Left ventricle myocardium inferior (tissue), 1 donor: ENCODE measurements at regions of chr13 and their contacts with region 1.

Region 1: DNA sequence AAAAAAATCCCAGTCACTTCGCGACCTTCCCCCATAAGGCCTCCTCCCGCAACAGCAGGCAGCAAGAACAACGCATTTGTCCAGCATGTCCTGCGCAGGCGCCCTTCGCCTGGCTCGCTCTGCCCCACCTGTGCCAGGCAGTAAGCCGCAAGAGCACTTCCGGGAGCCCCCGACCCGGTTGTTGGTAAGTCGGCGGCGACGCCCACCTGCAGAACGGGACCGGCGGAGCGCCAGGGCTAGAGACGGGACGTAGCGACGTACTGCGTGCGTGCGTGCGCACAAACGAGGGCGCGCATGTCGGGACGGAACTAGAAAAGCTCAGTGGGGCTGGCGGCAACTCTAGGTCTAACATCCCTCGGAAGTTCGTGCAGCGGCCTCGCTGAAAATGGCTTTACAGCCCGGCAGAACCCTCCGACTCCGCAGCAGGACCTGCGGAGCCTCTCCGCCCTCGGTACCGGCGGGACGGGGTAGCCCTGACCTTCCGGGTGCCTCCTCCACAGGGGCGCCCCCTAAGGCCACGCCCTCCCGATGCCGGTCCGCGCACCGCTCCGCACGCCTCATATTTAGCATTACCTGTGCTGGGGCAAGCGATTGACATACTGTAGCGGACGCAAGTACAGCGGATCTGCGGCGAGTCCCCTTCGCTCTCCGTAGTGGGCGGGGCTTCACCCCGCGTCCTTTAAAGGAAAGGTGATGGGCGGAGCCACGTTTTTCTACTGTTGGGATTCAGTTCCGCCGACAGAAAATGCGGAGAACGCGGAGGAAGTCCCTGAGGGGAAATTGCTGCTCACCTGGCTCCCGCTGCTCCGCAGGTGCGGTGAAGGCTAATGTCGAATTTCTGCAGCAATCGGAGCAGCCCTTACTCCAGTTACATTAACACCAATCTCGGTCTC is at the start of gene MTIF3:
- DNase-seq: peak; percentile 92
- H3K4me3 ChIP-seq: peak within 1 kb of the TSS; percentile 88
- H3K27ac ChIP-seq: peak within 1 kb of the TSS; percentile 100
- H3K4me1 ChIP-seq: peaks cover 73% of the 10 kb centered on the region
- H3K27me3 ChIP-seq: no peaks in the 10 kb centered on the region
- CTCF ChIP-seq: peak; percentile 23
- total RNA-seq, gene MTIF3: 140 TPM

Region 2: GRCh38 chr13:27110069-27110746 is 340.0 kb before region 1 on chr13:
- intact Hi-C with region 1: no loop called
- DNase-seq: no peak
- H3K4me3 ChIP-seq: no peak overlapping the region
- H3K27ac ChIP-seq: no peak overlapping the region
- H3K4me1 ChIP-seq: peaks cover 10% of the 10 kb centered on the region
- H3K27me3 ChIP-seq: no peaks in the 10 kb centered on the region
- CTCF ChIP-seq: no peak

Region 3: DNA sequence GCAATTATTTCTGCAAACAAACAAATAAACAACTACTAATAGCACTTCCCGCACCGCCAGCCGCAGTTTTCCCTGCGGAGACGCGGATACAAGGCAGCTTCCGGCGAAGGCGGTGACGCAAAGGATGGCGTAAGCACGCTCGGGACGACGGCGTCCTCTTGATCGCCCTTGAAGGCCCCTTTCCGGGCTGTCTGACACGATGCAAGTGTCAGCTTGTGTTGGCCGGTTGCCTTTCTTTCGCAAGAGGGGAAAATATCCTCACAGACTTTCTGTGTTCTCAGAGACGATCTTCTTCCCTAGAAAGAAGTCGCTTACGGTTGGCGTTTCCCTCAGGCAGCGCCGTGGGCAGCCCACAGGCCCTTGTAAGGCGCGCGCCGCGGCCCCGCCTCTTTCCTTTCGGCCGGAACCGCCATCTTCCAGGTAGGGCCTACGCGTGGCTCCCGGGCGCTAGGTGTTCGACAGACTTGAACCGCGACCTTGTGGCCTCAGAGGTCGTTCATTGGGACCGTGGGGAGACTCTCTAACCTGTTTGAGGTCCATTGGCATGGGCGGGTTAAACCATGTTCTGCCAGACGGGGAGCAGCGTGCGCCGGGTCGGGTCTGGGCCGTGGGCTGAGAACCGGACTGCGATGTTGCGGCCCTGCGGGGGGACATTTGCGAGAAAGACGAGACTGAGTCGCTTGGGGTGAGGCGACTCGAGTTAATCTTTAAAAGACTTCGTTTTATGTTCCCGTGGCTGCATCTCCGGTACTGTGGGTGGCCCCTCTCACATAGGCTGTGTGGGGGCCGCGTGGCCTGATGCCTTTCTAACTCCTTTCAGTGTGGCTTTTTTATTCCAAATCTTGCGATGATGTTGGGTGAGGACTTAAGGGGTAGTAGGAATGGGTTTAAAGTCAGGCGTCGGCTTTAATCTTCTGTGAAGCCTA is 198.8 kb before region 1 on chr13 and contains the start of gene RPL21:
- intact Hi-C with region 1: loop called (anchors 10 kb)
- DNase-seq: peak; percentile 95
- H3K4me3 ChIP-seq: peak within 1 kb of the TSS; percentile 88
- H3K27ac ChIP-seq: peak within 1 kb of the TSS; percentile 98
- H3K4me1 ChIP-seq: peaks cover 61% of the 10 kb centered on the region
- H3K27me3 ChIP-seq: no peaks in the 10 kb centered on the region
- CTCF ChIP-seq: no peak
- total RNA-seq, gene RPL21: 674 TPM

Region 4: DNA sequence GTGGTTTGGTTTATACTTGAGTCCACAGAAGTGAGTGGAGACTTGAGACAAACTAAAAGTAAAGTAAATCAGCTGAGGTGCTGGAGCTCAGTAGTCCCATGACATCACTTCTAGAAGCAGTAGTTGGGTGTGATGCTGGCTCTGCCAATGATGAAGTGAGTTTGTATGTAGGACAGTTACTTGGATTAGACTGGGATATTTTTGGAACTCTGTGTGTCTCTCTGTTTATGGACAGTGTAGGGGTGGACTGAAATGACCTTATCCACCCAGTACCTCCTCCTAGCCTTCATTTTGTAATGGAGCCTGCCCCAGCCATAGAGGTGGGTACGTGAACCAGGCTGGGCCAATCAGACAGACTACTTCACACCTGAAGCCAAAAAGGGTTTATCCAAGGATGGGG is 223.7 kb after region 1 on chr13:
- intact Hi-C with region 1: no loop called
- DNase-seq: no peak
- H3K4me3 ChIP-seq: no peak overlapping the region
- H3K27ac ChIP-seq: peak overlapping the region; percentile 48
- H3K4me1 ChIP-seq: peaks cover 12% of the 10 kb centered on the region
- H3K27me3 ChIP-seq: no peaks in the 10 kb centered on the region
- CTCF ChIP-seq: no peak

Region 5: DNA sequence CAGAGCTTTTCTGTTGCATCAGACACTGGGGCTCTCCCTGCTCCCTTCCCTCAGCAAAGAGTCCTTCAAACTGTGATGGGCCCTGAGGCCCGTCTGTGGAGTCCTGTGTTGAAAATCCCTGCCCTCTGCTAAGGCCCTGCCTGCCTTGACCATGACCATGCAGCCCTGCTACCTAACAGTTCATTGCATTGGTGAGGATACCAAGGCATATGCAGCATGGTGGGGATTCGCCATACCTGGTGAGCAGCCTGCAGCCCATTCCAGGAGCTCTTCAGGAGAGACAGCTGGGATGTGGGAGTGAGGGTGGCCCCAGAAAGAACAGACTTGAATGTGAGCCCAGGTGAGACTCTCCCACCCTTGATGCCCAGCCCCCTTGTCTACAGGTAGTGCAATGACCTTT is 271.5 kb after region 1 on chr13:
- intact Hi-C with region 1: no loop called
- DNase-seq: no peak
- H3K4me3 ChIP-seq: no peak overlapping the region
- H3K27ac ChIP-seq: no peak overlapping the region
- H3K4me1 ChIP-seq: no peaks in the 10 kb centered on the region
- H3K27me3 ChIP-seq: peaks cover 49% of the 10 kb centered on the region
- CTCF ChIP-seq: no peak